Endothelial cell of umbilical vein (primary cell): ENCODE measurements at regions of chr2 and their contacts with region 1.

Region 1: DNA sequence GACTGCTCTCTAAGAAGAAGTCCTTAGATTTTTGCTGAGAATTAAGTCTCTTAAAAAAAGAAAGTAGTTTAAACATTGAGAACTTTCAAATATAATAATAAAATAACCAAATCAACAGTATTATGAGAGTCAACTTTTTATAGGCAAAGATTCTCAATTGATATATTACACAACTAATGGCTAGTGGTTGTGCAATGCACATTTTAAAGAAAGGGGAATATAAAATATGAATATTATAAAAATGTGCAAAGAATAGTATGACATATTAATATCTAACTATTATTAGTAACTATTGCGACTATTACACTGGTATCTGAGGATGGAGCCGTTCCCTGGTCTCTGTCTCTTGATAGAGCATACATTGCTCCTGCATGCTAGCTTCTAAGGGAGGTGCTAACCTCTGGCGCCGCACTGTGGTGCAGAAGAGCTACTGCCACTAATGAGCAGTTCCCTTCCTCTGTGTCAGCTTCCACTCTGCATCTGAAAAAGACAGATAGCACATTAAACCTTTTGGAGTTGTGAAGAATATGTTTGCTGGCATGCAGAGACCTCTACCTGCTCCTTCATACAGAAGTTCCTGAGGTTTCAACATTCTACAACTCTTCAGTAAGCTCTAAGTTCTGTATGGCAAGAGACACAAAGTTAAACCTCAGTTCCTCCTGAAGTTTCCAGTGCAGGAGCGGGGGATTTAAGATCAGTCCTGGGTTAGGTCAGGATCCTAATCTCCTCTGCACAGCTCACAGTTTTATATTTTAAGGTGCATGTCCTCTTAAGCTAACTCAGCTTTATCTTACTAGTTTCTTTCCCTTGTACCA is 3.5 kb upstream of the SLC9A2 start:
- DNase-seq: peak; percentile 45
- H3K4me3 ChIP-seq: no peak overlapping the region
- H3K27ac ChIP-seq: no peak overlapping the region
- H3K4me1 ChIP-seq: peaks cover 2% of the 10 kb centered on the region
- H3K27me3 ChIP-seq: peaks cover 35 to 74% of the 10 kb centered on the region in 2 experiments
- CTCF ChIP-seq: peak; percentile 82 to 89
- POLR2A ChIP-seq: no peak

Region 2: GRCh38 chr2:101704046-101704466 is 911.8 kb before region 1 on chr2:
- CTCF ChIA-PET with region 1: no interaction called
- POLR2A ChIA-PET with region 1: no interaction called
- dilution Hi-C with region 1: no loop called
- intact Hi-C with region 1: no loop called
- DNase-seq: peak; percentile 52
- H3K4me3 ChIP-seq: no peak overlapping the region
- H3K27ac ChIP-seq: peak overlapping the region; percentile 67
- H3K4me1 ChIP-seq: peaks cover 49% of the 10 kb centered on the region
- H3K27me3 ChIP-seq: no peaks in the 10 kb centered on the region
- CTCF ChIP-seq: no peak
- POLR2A ChIP-seq: no peak

Region 3: DNA sequence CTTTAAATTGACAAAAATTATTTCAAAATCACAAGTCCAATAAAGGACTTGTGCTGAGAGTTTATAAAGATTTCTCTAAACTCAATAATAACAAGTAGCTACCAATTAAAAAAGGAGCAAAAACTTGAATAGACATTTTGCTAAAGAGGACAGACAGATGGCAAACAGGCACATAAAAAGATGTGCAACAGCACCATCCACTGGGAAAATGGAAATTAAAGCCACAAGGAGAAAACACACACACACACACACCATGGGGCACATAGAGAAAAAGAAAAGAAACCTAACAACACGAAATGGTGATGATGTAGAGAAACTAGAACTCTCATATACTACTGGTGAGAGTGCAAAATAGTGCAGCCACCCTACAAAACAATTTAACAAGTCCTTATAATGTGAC is 155.4 kb before region 1 on chr2:
- CTCF ChIA-PET with region 1: interaction called, 12 read pairs
- POLR2A ChIA-PET with region 1: no interaction called
- dilution Hi-C with region 1: no loop called
- intact Hi-C with region 1: no loop called
- DNase-seq: no peak
- H3K4me3 ChIP-seq: no peak overlapping the region
- H3K27ac ChIP-seq: no peak overlapping the region
- H3K4me1 ChIP-seq: no peaks in the 10 kb centered on the region
- H3K27me3 ChIP-seq: peaks cover 9 to 19% of the 10 kb centered on the region in 2 experiments
- CTCF ChIP-seq: no peak
- POLR2A ChIP-seq: no peak

Region 4: GRCh38 chr2:102487761-102488466 is 127.9 kb before region 1 on chr2:
- CTCF ChIA-PET with region 1: interaction called, 14 read pairs
- POLR2A ChIA-PET with region 1: no interaction called
- dilution Hi-C with region 1: no loop called
- intact Hi-C with region 1: no loop called
- DNase-seq: peak; percentile 4
- H3K4me3 ChIP-seq: no peak overlapping the region
- H3K27ac ChIP-seq: no peak overlapping the region
- H3K4me1 ChIP-seq: no peaks in the 10 kb centered on the region
- H3K27me3 ChIP-seq: peaks cover 9 to 11% of the 10 kb centered on the region in 2 experiments
- CTCF ChIP-seq: no peak
- POLR2A ChIP-seq: no peak

Region 5: DNA sequence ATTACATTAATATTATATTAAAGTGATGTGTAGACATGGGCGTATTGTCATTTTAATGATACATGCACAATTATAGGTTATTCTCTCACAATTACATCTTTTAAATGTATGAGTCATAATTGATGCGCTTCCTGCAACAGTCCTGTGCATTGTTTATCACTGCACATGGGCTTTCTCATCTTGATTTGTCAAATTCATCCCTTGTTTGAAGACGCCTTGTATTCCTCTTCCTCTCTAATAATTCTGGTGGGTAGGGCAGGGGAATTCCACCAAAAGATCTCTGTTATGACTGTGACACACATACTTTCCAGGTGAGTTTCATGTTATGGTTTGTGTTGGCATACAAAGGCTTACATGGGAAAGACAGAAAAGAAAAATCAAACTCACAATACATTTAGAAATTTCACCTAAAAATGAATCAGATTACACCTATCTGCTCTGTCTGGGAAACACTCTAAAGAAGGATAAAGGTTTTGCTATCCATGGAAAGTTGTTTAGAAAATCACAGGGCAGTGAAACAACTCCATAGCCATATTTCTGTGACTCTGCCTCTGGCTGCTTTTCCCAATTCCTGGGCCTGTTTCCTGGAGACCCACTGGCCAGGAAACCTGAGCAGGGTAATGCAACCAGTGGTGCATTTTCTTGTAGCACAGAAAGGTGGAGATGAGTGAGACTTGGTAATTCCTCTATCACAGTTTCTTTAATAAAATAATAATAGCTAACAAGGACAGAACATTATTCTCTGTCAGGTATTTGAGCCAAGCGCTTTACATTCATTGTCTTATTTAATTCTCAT is 16.7 kb after region 1 on chr2:
- CTCF ChIA-PET with region 1: interaction called, 11 read pairs
- POLR2A ChIA-PET with region 1: no interaction called
- dilution Hi-C with region 1: no loop called
- intact Hi-C with region 1: no loop called
- DNase-seq: no peak
- H3K4me3 ChIP-seq: no peak overlapping the region
- H3K27ac ChIP-seq: no peak overlapping the region
- H3K4me1 ChIP-seq: no peaks in the 10 kb centered on the region
- H3K27me3 ChIP-seq: peaks cover 0 to 12% of the 10 kb centered on the region in 2 experiments
- CTCF ChIP-seq: no peak
- POLR2A ChIP-seq: no peak

Region 6: DNA sequence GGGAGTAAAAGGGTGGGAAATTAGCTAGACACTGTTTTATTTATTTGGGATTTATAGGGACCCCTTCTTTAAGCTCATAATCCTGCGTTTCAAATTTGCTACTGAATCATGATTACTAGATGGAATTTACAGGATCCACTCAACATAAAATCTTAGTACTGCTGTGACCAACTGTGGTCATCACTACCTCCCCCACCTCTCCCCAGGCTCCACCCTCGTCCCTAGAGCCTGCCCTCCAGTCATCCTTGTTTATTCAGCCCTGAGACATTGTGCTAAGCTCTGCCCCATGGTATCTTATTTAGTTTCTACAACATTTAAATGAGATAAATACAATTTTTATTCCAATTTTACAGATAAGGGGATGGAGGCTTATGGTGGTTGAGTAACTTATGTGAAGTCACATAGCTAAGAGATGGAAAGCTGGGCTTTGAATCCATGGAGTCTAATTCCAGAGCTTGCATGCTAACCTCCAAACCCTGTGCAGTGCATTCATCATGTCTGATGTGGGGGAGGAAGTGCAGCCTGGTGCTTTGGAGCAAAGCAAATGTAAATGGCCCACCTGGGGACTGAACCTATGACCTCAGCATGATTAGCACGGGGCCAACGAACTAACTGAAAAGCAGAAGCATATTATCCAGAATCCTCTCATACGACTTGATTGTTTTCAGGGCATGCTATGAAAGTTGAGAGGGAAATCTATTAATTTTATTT is 648.4 kb after region 1 on chr2:
- CTCF ChIA-PET with region 1: no interaction called
- POLR2A ChIA-PET with region 1: no interaction called
- dilution Hi-C with region 1: no loop called
- intact Hi-C with region 1: no loop called
- DNase-seq: no peak
- H3K4me3 ChIP-seq: no peak overlapping the region
- H3K27ac ChIP-seq: no peak overlapping the region
- H3K4me1 ChIP-seq: no peaks in the 10 kb centered on the region
- H3K27me3 ChIP-seq: no peaks in the 10 kb centered on the region
- CTCF ChIP-seq: no peak
- POLR2A ChIP-seq: no peak